Activated CD4-positive, alpha-beta T cell treated with anti-CD3 and anti-CD28 coated beads for 36 hours (primary cell): ENCODE measurements at regions of chr5 and their contacts with region 1.

Region 1: GRCh38 chr5:72955768-72956323 is at the start of gene FCHO2:
- DNase-seq: peak; percentile 98
- ATAC-seq: peak; percentile 96
- H3K4me3 Mint-ChIP-seq: peak within 1 kb of the TSS; percentile 79
- H3K27ac Mint-ChIP-seq: peak within 1 kb of the TSS; percentile 74
- H3K4me1 Mint-ChIP-seq: peaks cover 9% of the 10 kb centered on the region
- H3K27me3 Mint-ChIP-seq: peaks cover 41% of the 10 kb centered on the region
- total RNA-seq, gene FCHO2: 0.86 to 1.3 TPM

Region 2: GRCh38 chr5:71922584-71923106 is 1033.2 kb before region 1 on chr5:
- CTCF ChIA-PET with region 1: no interaction called
- POLR2A ChIA-PET with region 1: no interaction called
- intact Hi-C with region 1: no loop called
- DNase-seq: no peak
- ATAC-seq: no peak
- H3K4me3 Mint-ChIP-seq: no peak overlapping the region
- H3K27ac Mint-ChIP-seq: no peak overlapping the region
- H3K4me1 Mint-ChIP-seq: no peaks in the 10 kb centered on the region
- H3K27me3 Mint-ChIP-seq: peaks cover 22% of the 10 kb centered on the region

Region 3: GRCh38 chr5:72720205-72720604 is 235.6 kb before region 1 on chr5:
- CTCF ChIA-PET with region 1: no interaction called
- POLR2A ChIA-PET with region 1: no interaction called
- intact Hi-C with region 1: no loop called
- DNase-seq: no peak
- ATAC-seq: no peak
- H3K4me3 Mint-ChIP-seq: no peak overlapping the region
- H3K27ac Mint-ChIP-seq: no peak overlapping the region
- H3K4me1 Mint-ChIP-seq: no peaks in the 10 kb centered on the region
- H3K27me3 Mint-ChIP-seq: peaks cover 7% of the 10 kb centered on the region

Region 4: GRCh38 chr5:72847989-72848473 is 107.8 kb before region 1 on chr5:
- CTCF ChIA-PET with region 1: no interaction called
- POLR2A ChIA-PET with region 1: no interaction called
- intact Hi-C with region 1: loop called in 1 of 2 experiments (anchors 2 kb)
- DNase-seq: peak; percentile 92
- ATAC-seq: peak; percentile 88
- H3K4me3 Mint-ChIP-seq: peak overlapping the region; percentile 92
- H3K27ac Mint-ChIP-seq: peak overlapping the region; percentile 97
- H3K4me1 Mint-ChIP-seq: peaks cover 45% of the 10 kb centered on the region
- H3K27me3 Mint-ChIP-seq: no peaks in the 10 kb centered on the region

Region 5: GRCh38 chr5:73201547-73202513 is 246.0 kb after region 1 on chr5:
- CTCF ChIA-PET with region 1: no interaction called
- POLR2A ChIA-PET with region 1: interaction called, 10 read pairs
- intact Hi-C with region 1: loop called (anchors 2 to 5 kb)
- DNase-seq: peak; percentile 85
- ATAC-seq: peak; percentile 96
- H3K4me3 Mint-ChIP-seq: no peak overlapping the region
- H3K27ac Mint-ChIP-seq: no peak overlapping the region
- H3K4me1 Mint-ChIP-seq: peaks cover 3% of the 10 kb centered on the region
- H3K27me3 Mint-ChIP-seq: peaks cover 69% of the 10 kb centered on the region

Region 6: DNA sequence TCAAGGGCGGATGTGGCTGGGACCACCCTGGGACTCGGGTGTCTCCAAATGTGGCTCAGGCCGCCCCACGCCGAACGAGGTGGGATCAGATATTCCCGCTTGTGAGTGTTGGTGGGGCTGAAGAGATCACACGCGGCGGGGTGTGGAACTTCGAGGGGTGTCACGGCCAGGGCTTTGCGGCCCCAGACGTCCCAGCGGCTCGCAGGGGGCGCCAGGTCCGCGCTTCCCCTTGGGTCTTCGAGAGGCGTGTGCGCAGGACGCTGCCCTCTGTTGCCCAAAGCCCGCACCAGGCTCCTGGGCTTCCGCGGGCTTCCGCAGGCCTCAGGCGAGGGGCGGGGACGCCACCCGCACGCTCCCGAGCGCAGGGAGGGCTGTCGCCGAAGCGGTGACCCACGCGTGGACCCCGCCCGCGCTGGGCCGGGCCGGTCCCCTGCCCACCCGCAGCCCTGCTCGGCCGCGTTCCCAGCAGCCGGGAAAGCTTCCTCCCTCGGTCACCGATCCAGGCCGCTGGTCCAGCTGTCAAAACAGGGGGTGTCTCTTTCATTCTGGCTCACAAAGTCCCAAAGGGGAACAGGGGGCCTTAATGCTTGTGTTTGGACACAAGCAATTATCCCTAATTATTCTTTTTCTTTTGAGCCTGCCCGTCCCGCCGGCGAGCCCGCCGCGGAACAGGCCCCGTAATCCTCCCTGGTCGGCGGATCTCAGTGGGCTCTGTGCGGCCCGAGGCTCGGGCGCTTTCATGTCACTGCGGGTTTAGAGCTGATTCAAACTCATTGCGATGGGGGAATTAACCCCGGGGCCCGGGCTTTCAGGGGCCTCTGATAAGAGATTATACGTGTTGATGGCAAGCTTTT is 277.7 kb after region 1 on chr5:
- CTCF ChIA-PET with region 1: no interaction called
- POLR2A ChIA-PET with region 1: no interaction called
- intact Hi-C with region 1: no loop called
- DNase-seq: peak; percentile 23
- ATAC-seq: no peak
- H3K4me3 Mint-ChIP-seq: peak overlapping the region; percentile 10
- H3K27ac Mint-ChIP-seq: no peak overlapping the region
- H3K4me1 Mint-ChIP-seq: peaks cover 28% of the 10 kb centered on the region
- H3K27me3 Mint-ChIP-seq: peaks cover 62% of the 10 kb centered on the region

Region 7: DNA sequence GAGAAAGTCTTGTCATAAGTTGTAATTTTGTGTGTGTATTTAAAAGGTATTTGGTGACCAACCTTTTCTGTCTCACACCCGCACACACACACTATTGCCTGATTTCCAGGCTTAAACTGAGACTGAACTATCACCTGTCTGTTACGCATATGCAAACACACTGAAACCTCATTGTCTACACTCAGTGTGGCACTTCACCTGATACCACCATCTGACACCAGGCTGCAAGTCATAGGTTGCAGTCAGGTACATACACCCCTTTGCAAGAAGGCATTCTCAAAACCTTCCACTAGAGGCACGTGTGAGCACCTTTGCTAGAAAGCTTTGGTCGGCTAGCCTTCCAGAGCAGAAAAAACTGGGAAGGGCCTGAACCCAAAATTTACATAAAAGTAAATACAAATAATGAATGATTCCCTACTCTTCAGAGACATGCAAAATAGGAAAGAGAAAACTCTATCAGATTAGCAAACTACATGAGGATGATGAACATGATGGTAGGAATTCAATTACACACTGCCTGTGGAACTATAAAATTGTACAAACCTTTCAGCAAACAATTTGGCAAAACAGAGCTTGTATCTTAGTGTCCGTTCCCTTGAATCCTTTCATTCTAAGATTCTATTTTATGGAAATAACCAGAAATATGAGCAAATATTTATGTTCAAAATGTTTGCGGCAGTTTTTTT is 498.6 kb after region 1 on chr5:
- CTCF ChIA-PET with region 1: no interaction called
- POLR2A ChIA-PET with region 1: no interaction called
- intact Hi-C with region 1: loop called (anchors 1 to 10 kb)
- DNase-seq: peak; percentile 53
- ATAC-seq: peak; percentile 78
- H3K4me3 Mint-ChIP-seq: no peak overlapping the region
- H3K27ac Mint-ChIP-seq: no peak overlapping the region
- H3K4me1 Mint-ChIP-seq: no peaks in the 10 kb centered on the region
- H3K27me3 Mint-ChIP-seq: peaks cover 61% of the 10 kb centered on the region